Endothelial cell of umbilical vein (primary cell): ENCODE measurements at regions of chr9 and their contacts with region 1.

Region 1: GRCh38 chr9:14661421-14662059 is 31.7 kb downstream of the ZDHHC21 start:
- DNase-seq: peak; percentile 73
- H3K4me3 ChIP-seq: no peak overlapping the region
- H3K27ac ChIP-seq: no peak overlapping the region
- H3K4me1 ChIP-seq: peaks cover 6% of the 10 kb centered on the region
- H3K27me3 ChIP-seq: no peaks in the 10 kb centered on the region
- CTCF ChIP-seq: peak; percentile 28 to 50
- POLR2A ChIP-seq: no peak

Region 2: DNA sequence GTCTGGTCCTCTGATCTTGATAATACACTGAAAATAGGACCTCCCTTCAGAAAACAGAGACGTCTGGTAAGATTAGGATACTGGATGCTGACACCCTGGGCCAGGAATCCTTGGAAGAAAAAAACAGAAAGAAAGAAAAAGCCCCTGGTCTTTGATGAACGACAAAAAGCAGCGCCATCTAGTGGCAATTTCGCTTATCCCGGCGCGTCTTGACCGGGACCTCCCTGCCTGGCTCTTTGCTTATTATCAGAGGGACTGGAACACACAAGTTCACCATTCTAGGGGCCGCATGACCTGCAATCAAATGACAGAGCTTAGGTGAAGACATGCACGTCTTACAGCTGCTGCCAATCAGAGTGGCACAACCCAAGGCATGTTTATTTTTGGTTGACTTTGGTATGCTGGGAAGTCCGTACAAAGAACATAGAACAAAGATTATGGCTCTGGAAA is 232.7 kb before region 1 on chr9:
- CTCF ChIA-PET with region 1: interaction called, 11 read pairs
- POLR2A ChIA-PET with region 1: no interaction called
- dilution Hi-C with region 1: no loop called
- intact Hi-C with region 1: no loop called
- DNase-seq: peak; percentile 68
- H3K4me3 ChIP-seq: no peak overlapping the region
- H3K27ac ChIP-seq: no peak overlapping the region
- H3K4me1 ChIP-seq: peaks cover 15% of the 10 kb centered on the region
- H3K27me3 ChIP-seq: no peaks in the 10 kb centered on the region
- CTCF ChIP-seq: peak; percentile 79 to 84
- POLR2A ChIP-seq: no peak

Region 3: DNA sequence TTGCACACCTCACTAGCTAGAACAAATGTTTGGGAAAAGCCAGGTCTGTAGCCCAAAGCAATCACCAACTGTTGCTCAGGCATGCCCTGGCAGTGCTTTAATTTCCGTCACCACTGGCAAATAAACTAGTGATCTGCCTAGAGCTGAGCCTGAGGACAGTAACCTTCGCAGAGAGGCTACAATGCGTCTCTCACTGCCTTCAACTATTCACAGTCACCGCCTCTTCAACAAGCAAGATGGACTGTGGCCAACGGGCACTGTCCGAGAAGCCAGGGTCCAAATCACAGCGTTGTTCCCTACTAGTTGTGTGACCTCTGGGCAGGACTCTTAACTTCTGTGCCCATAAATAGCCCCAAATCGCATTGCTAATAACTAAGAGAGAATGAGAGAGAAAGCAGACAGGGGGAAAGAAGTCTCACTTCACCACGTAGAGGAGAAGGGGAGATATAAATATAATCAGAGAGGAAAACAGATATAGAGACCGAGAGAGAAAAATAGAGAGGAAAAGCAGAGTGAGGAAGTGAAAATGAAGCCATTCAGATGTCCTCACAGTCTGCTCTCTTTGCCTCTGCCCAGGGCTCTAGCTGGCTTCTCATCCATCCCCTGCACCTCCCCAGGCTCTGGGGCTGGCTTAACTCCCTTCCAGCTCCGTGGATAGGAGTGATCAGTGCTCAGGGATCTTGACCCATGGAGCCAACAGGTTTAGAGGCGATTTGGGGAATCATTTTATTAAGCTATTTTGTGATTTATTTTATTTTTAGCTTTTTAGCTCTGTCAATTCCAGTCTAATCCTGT is 126.2 kb before region 1 on chr9:
- CTCF ChIA-PET with region 1: no interaction called
- POLR2A ChIA-PET with region 1: no interaction called
- dilution Hi-C with region 1: no loop called
- intact Hi-C with region 1: no loop called
- DNase-seq: no peak
- H3K4me3 ChIP-seq: no peak overlapping the region
- H3K27ac ChIP-seq: no peak overlapping the region
- H3K4me1 ChIP-seq: no peaks in the 10 kb centered on the region
- H3K27me3 ChIP-seq: peaks cover 4 to 20% of the 10 kb centered on the region in 2 experiments
- CTCF ChIP-seq: no peak
- POLR2A ChIP-seq: no peak

Region 4: GRCh38 chr9:14608540-14608939 is 53.0 kb before region 1 on chr9:
- CTCF ChIA-PET with region 1: interaction called, 11 read pairs
- POLR2A ChIA-PET with region 1: no interaction called
- dilution Hi-C with region 1: no loop called
- intact Hi-C with region 1: no loop called
- DNase-seq: peak; percentile 82
- H3K4me3 ChIP-seq: no peak overlapping the region
- H3K27ac ChIP-seq: no peak overlapping the region
- H3K4me1 ChIP-seq: no peaks in the 10 kb centered on the region
- H3K27me3 ChIP-seq: no peaks in the 10 kb centered on the region
- CTCF ChIP-seq: no peak
- POLR2A ChIP-seq: no peak

Region 5: GRCh38 chr9:14693206-14693861 is 31.8 kb after region 1 on chr9 and contains the start of gene ZDHHC21:
- CTCF ChIA-PET with region 1: interaction called, 38 read pairs
- POLR2A ChIA-PET with region 1: no interaction called
- dilution Hi-C with region 1: no loop called
- intact Hi-C with region 1: loop called (anchors 5 kb)
- DNase-seq: peak; percentile 51
- H3K4me3 ChIP-seq: peak within 1 kb of the TSS; percentile 77 to 97 (median 89)
- H3K27ac ChIP-seq: peak within 1 kb of the TSS; percentile 63
- H3K4me1 ChIP-seq: peaks cover 23% of the 10 kb centered on the region
- H3K27me3 ChIP-seq: no peaks in the 10 kb centered on the region
- CTCF ChIP-seq: no peak
- POLR2A ChIP-seq: peak; percentile 78
- total RNA-seq, gene ZDHHC21: 21.0 and 25.9 TPM in 2 replicates

Region 6: DNA sequence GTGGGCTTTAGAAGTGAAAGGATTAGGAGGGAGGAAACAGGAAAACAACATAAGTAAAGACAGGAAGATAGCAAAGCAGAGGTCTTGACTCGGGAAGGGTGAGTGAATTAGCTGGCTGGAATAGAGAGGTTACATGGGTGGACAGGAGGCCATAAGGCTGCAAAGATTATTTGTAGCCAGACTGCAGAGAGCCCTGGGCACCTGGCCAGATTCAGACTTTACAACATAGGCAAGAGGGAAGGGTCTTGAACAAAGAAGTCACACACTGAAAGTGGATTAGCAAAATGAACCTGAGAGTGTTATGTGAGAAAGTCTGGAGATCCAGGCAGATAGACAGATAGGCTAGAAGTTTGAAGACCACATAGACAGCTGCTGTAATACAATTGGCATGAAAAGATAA is 90.7 kb after region 1 on chr9:
- CTCF ChIA-PET with region 1: interaction called, 15 read pairs
- POLR2A ChIA-PET with region 1: no interaction called
- dilution Hi-C with region 1: no loop called
- intact Hi-C with region 1: no loop called
- DNase-seq: peak; percentile 97
- H3K4me3 ChIP-seq: no peak overlapping the region
- H3K27ac ChIP-seq: peak overlapping the region; percentile 59
- H3K4me1 ChIP-seq: peaks cover 39% of the 10 kb centered on the region
- H3K27me3 ChIP-seq: no peaks in the 10 kb centered on the region
- CTCF ChIP-seq: no peak
- POLR2A ChIP-seq: peak; percentile 42

Region 7: GRCh38 chr9:15469406-15469805 is 807.9 kb after region 1 on chr9:
- CTCF ChIA-PET with region 1: no interaction called
- POLR2A ChIA-PET with region 1: no interaction called
- dilution Hi-C with region 1: no loop called
- intact Hi-C with region 1: no loop called
- DNase-seq: no peak
- H3K4me3 ChIP-seq: no peak overlapping the region
- H3K27ac ChIP-seq: no peak overlapping the region
- H3K4me1 ChIP-seq: peaks cover 4% of the 10 kb centered on the region
- H3K27me3 ChIP-seq: no peaks in the 10 kb centered on the region
- CTCF ChIP-seq: no peak
- POLR2A ChIP-seq: no peak